Psoas muscle (tissue), 8 donors: ENCODE measurements at regions of chr14 and their contacts with region 1.

Region 1: GRCh38 chr14:30375296-30375892 is 183.6 kb upstream of the G2E3 start:
- DNase-seq: peak; percentile 37 to 74
- ATAC-seq: peak; percentile 71 to 92 (median 84)
- H3K4me3 ChIP-seq: no peak overlapping the region
- H3K27ac ChIP-seq: no peak overlapping the region
- H3K4me1 ChIP-seq: no peaks in the 10 kb centered on the region
- H3K27me3 ChIP-seq: no peaks in the 10 kb centered on the region
- CTCF ChIP-seq: peak; percentile 79

Region 2: DNA sequence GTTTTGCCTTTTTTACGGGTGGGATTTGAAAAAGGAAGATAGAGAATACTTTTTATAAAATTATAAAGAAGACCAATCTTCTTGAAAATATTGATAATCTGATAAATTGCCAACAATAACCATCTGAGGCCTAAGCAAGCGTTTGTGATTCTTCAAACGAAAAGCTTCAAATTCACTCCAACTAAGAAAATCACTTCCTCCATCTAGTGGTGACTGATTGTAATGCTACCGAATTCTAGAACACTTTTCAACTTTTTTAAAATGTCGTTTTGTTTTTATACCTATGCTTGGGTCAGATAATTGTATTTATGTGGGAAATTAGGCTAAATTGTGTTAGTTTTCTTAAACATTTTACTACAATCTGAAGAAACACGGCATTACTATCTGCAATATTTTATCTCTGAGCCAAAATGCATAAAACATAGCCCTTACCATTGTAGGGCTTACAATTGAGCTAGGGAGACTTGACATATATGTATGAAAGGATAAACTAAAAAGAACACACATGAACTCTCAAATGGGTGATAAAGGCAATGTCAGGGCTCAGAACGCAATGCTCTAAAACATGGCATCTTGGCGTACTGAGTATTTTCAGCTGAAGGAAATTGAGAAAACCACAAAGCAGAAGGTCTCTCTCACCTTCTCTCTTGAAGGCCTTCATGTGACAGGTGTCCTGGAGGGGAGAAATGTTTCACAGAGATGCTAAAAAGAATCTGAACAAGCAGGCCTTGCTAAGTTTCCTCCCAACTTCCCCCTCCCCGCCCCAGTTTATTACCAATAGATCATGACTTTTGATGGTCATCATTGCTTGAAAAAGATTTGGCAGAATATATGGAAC is 146.7 kb after region 1 on chr14:
- intact Hi-C with region 1: loop called (anchors 2 to 10 kb)
- DNase-seq: no peak
- ATAC-seq: peak in 2 of 4 donors; percentile 39 to 60
- H3K4me3 ChIP-seq: no peak overlapping the region
- H3K27ac ChIP-seq: no peak overlapping the region
- H3K4me1 ChIP-seq: peaks cover 8% of the 10 kb centered on the region
- H3K27me3 ChIP-seq: no peaks in the 10 kb centered on the region
- CTCF ChIP-seq: peak; percentile 79

Region 3: DNA sequence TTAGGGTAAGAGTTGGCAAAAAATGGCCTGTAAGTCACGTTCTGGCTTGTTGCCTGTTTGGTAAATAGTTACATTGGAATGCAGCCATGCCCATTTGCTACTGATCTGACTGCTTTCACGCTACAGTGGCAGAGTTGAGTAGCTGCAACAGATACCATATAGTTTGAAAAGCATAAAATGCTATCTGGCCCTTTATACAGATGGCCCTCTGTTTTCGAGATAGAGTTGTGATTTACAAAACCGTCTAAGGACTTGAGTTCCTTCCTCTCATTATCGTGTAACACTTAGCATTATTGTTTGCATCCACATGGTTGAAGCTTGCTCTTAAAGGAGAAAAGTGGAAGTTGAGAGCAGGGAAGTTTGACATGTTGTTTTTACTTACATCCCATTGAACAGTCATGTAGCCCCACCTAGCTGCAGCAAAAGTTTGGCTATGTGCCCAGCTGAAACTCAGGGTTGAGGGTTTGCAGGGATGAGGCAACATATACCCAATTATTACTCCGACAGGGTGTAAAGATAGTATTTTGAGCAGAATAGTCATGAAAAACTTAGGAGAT is 235.5 kb after region 1 on chr14:
- intact Hi-C with region 1: loop called (anchors 2 to 5 kb)
- DNase-seq: peak in 1 of 2 donors; percentile 62
- ATAC-seq: peak in 3 of 4 donors; percentile 51 to 58 (median 53)
- H3K4me3 ChIP-seq: no peak overlapping the region
- H3K27ac ChIP-seq: no peak overlapping the region
- H3K4me1 ChIP-seq: peaks cover 22% of the 10 kb centered on the region
- H3K27me3 ChIP-seq: no peaks in the 10 kb centered on the region
- CTCF ChIP-seq: peak; percentile 54